ENCODE measurements at regions of chr17 and their contacts with region 1.

Region 1: DNA sequence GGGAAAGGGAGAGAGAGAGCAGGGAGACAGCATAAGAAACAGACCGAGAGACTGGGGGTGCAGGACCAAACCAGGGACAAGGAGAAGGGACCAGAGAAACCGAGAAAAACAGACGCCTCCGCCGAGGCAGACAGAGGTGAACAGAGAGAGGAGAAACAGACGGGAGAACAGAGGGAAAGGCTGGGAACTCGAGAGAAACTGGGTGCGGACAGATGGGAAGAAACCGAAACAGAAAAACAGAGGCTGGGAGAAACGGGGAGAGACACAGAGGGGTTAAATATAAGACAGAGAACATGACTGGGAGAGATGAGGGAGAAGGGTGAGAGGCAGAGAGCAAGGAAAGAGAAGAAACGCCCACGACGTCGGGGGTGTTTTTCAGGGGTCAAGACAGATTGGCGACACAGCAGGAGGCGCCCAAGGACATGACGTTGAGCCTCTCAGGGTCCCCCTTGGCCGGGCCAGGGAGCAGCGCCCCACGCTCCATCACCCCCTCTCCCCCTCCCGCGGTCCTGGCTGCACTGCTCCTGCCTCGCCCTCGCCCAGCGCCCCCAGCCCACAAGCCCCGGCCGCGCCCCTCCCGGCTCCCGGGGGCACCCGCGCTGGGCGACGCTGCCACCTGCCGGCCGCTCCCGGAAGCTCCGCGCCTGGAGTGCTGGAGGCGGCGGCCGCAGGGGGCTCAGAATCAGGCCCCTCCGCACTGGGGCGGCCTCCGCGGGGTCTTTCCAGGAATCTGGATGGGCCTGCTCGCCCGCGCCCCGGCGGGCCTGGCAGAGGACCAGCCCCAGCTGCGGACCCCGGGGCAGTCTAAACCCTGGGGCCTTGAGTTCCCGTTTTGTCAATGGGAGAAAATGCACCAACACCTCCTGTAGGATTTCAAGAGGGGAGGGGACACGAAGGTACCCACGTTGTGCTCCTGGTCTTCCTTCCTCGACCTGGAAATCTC is 1.3 kb upstream of the TMEM92 start:
- DNase-seq: peak; percentile 85

Region 2: GRCh38 chr17:50297407-50297865 is 24.5 kb after region 1 on chr17:
- intact Hi-C with region 1: loop called (anchors 2 kb)
- DNase-seq: peak; percentile 89

Region 3: GRCh38 chr17:50345432-50346312 is 72.7 kb after region 1 on chr17 and contains the start of gene XYLT2:
- intact Hi-C with region 1: no loop called
- DNase-seq: peak; percentile 94
- total RNA-seq, gene XYLT2: 10.8 TPM

Region 4: GRCh38 chr17:50406578-50406977 is 133.6 kb after region 1 on chr17:
- intact Hi-C with region 1: no loop called
- DNase-seq: peak; percentile 17